ENCODE measurements at regions of chr15 and their contacts with region 1.

Region 1: DNA sequence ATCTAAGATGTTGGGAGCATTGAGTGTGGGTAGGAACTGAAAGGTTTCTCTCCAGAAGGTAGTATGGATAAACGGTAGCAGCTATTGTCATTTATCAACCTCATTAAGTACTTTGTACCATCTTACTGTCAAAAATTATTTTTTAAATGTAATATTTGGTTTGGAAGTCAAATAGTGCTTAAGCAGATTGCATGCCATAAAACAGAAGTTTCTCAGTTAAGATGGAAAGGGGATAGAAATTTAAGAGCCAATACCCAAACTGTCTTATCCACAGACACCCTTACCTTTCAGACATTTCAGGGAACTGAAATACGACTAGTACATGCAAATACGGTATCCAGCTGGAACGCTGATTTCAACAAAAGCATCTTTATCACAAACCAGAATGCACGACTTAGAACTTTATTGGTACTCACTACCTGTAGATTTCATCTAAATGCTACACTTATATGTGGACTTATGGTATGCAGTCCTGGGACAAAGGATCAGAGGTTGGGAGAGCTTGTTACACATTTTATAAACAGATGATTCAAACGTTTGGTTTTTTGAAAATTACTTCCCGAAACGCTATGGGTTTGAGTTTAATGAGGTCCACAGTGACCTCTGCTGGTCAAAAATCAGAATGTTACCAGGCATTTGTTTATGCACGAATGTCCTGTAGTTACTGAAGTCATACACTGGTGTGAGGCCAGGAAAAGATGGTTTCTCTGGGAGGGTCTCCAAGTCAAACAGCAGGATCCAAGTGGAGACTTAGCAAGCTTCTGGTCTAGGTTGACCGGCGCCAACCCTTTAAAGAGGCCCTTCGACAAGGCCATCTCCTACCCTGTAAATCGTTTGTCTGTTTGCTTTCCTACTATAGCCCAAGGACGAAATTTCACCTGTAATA is 45.7 kb upstream of the DUT start:
- DNase-seq: no peak
- ATAC-seq: peak; percentile 79

Region 2: GRCh38 chr15:47196057-47196456 is 1089.5 kb before region 1 on chr15:
- intact Hi-C with region 1: loop called (anchors 5 kb)
- DNase-seq: peak; percentile 76
- ATAC-seq: peak; percentile 95

Region 3: DNA sequence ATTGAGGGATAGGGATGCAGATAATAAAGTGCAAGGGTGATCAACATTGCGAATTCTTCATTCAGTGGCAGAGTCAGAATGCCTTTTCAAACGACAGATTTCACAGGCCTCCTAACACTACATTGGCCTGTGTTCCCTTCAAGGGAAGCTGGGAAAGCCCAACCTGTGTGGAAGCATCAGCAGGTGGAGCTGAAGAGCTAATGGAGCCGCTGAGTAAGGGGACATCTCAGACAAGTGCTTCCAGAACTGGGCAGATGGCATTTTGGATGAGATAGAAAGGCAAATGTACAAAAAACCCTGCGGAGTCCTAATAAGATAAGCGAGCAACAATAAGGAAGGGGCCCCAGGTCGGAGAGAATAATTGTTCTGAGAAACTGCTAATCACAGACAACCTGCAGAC is 173.3 kb before region 1 on chr15:
- intact Hi-C with region 1: loop called (anchors 10 kb)
- DNase-seq: no peak
- ATAC-seq: peak; percentile 68

Measured in left ventricle myocardium superior (tissue), 1 donor.